Natural killer cell (primary cell): ENCODE measurements at regions of chr13 and their contacts with region 1.

Region 1: GRCh38 chr13:95834134-95834765 is 157.3 kb downstream of the DNAJC3 start:
- DNase-seq: peak; percentile 47 to 83
- ATAC-seq: peak; percentile 82 to 93 (median 90)
- H3K4me3 ChIP-seq: no peak overlapping the region
- H3K4me3 Mint-ChIP-seq: no peak overlapping the region
- H3K27ac ChIP-seq: no peak overlapping the region
- H3K27ac Mint-ChIP-seq: no peak overlapping the region
- H3K4me1 ChIP-seq: no peaks in the 10 kb centered on the region
- H3K4me1 Mint-ChIP-seq: no peaks in the 10 kb centered on the region
- H3K27me3 ChIP-seq: no peaks in the 10 kb centered on the region
- H3K27me3 Mint-ChIP-seq: peaks cover 0 to 2% of the 10 kb centered on the region in 2 donors
- CTCF ChIP-seq: peak; percentile 97

Region 2: DNA sequence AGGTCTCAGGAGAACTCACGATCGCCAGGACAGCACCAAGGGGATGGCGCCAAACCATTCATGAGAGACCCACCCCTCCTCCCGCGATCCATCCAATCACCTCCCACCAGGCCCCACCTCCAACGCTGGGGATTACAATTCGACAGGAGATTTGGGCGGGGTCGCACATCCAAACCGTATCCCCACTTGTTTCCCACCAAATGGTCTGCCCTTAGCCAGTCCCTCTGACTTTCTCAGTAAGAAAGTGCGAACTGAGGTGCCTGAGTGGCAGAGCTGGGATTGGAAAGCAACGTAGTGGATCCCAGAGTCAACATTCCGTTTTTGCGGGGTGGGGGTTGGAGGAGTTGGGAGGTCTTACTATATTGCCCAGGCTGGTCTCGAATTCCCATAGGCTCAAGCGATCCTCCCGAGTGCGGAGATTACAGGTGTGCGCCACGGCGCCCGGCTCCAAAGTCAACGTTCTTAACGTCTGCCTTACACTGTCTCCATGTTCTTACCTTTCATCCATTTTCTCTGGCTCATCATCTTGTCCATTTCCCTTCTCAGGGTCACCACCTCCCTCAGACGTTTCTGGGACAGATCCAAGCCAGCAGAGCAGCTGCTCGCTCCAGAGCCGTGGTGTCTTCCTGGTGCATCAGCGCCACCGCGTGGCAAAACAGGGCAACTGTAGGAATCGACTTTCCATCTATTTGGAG is 430.3 kb before region 1 on chr13:
- intact Hi-C with region 1: loop called (anchors 10 kb)
- DNase-seq: peak; percentile 68 to 87
- ATAC-seq: peak; percentile 86 to 97 (median 97)
- H3K4me3 ChIP-seq: peak overlapping the region; percentile 16
- H3K4me3 Mint-ChIP-seq: peak overlapping the region; percentile 78
- H3K27ac ChIP-seq: no peak overlapping the region
- H3K27ac Mint-ChIP-seq: peak overlapping the region in 1 of 2 donors; percentile 2
- H3K4me1 ChIP-seq: peaks cover 8% of the 10 kb centered on the region
- H3K4me1 Mint-ChIP-seq: peaks cover 5 to 12% of the 10 kb centered on the region in 2 donors
- H3K27me3 ChIP-seq: no peaks in the 10 kb centered on the region
- H3K27me3 Mint-ChIP-seq: peaks cover 6 to 7% of the 10 kb centered on the region in 2 donors
- CTCF ChIP-seq: peak; percentile 96

Region 3: DNA sequence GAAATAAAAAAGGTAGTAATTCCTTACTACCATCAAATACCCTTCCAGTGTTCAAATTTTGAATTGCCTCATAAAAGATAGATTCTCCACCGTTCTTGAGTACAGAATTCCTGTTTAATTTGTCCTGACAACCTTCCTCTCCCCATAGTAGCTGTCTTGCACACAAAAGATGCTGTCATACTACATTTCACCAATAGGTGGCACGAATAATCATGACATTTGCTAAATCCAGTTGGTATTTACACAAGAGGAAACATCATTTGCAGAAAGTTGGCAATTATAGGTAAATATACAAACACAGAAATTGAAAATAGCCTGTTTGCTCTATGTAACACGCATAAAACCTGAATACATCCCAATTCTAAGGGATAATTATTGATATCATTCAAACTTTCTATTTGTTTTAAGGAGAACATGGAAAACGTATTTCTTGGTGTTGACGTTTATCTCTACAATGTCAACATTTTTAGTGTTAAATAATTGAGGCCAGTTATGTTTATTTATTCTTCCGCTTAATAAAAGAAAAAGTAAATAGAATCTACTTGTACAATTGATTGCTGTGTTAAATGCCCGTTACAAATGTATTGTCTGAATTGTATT is 340.1 kb before region 1 on chr13:
- intact Hi-C with region 1: loop called (anchors 1 kb)
- DNase-seq: peak in 1 of 2 donors; percentile 65
- ATAC-seq: peak in 1 of 3 donors; percentile 48
- H3K4me3 ChIP-seq: no peak overlapping the region
- H3K4me3 Mint-ChIP-seq: no peak overlapping the region
- H3K27ac ChIP-seq: no peak overlapping the region
- H3K27ac Mint-ChIP-seq: no peak overlapping the region
- H3K4me1 ChIP-seq: no peaks in the 10 kb centered on the region
- H3K4me1 Mint-ChIP-seq: no peaks in the 10 kb centered on the region
- H3K27me3 ChIP-seq: no peaks in the 10 kb centered on the region
- H3K27me3 Mint-ChIP-seq: peaks cover 0 to 4% of the 10 kb centered on the region in 2 donors
- CTCF ChIP-seq: peak; percentile 74

Region 4: DNA sequence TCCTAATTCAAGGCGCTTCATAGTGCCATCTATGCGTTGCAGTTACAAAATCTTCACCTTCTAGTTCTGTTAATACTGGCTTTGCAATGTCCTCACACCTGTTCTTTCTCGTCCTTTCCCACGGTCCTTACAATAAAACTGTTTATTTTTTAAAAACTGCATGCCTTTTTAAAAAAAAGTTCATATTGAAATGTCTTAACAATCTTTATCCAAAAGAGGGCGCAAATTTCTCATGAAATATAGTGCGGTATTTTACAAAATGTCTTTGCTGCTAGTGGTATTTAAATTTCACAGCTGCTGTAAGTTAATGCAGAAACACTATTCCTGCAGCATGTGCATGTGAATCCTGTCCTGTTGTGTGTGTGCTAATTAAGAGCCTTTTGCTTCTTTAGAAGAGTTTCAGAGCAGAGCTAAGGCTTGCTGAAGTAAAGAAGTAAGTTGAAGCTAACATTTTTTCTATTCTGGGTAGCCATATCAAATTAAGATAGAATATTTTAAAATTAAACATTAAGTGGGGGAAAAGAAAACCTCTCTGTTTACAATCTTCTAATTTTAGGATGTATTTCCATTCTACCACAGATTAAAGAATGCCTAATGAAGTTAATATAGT is 297.5 kb before region 1 on chr13:
- intact Hi-C with region 1: loop called (anchors 5 kb)
- DNase-seq: peak in 1 of 2 donors; percentile 10
- ATAC-seq: no peak
- H3K4me3 ChIP-seq: no peak overlapping the region
- H3K4me3 Mint-ChIP-seq: no peak overlapping the region
- H3K27ac ChIP-seq: no peak overlapping the region
- H3K27ac Mint-ChIP-seq: no peak overlapping the region
- H3K4me1 ChIP-seq: no peaks in the 10 kb centered on the region
- H3K4me1 Mint-ChIP-seq: no peaks in the 10 kb centered on the region
- H3K27me3 ChIP-seq: peaks cover 2% of the 10 kb centered on the region
- H3K27me3 Mint-ChIP-seq: peaks cover 13 to 14% of the 10 kb centered on the region in 2 donors
- CTCF ChIP-seq: peak; percentile 37

Region 5: GRCh38 chr13:95624020-95624419 is 210.2 kb before region 1 on chr13:
- intact Hi-C with region 1: loop called (anchors 1 kb)
- DNase-seq: peak in 1 of 2 donors; percentile 70
- ATAC-seq: peak; percentile 29 to 62 (median 58)
- H3K4me3 ChIP-seq: no peak overlapping the region
- H3K4me3 Mint-ChIP-seq: no peak overlapping the region
- H3K27ac ChIP-seq: no peak overlapping the region
- H3K27ac Mint-ChIP-seq: no peak overlapping the region
- H3K4me1 ChIP-seq: no peaks in the 10 kb centered on the region
- H3K4me1 Mint-ChIP-seq: no peaks in the 10 kb centered on the region
- H3K27me3 ChIP-seq: no peaks in the 10 kb centered on the region
- H3K27me3 Mint-ChIP-seq: peaks cover 15 to 19% of the 10 kb centered on the region in 2 donors
- CTCF ChIP-seq: peak; percentile 68

Region 6: GRCh38 chr13:95874286-95874685 is 40.0 kb after region 1 on chr13:
- intact Hi-C with region 1: no loop called
- DNase-seq: no peak
- ATAC-seq: no peak
- H3K4me3 ChIP-seq: no peak overlapping the region
- H3K4me3 Mint-ChIP-seq: no peak overlapping the region
- H3K27ac ChIP-seq: no peak overlapping the region
- H3K27ac Mint-ChIP-seq: no peak overlapping the region
- H3K4me1 ChIP-seq: no peaks in the 10 kb centered on the region
- H3K4me1 Mint-ChIP-seq: no peaks in the 10 kb centered on the region
- H3K27me3 ChIP-seq: no peaks in the 10 kb centered on the region
- H3K27me3 Mint-ChIP-seq: peaks cover 0 to 3% of the 10 kb centered on the region in 2 donors
- CTCF ChIP-seq: no peak